Breast epithelium (tissue), 4 donors: ENCODE measurements at regions of chr18 and their contacts with region 1.

Region 1: DNA sequence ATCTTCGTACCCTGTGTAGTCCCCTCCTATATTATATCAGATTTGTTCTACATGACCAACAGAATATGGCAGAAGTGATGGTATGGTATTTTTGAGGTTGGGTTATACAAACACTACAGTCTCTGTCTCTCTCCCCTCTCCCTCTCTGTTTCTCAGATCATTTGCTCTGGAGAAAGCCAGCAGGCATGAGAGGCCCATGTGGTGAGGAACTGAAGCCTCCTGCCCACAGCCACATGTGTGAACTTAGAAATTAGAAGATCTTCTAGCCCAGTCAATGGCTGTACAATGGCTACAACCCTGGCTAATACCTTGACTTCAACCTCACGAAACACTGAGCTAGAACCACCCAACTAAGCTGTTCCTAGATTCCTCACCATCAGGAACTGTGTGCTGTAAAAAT is 250.6 kb downstream of the SMAD2 start:
- DNase-seq: no peak
- H3K4me3 ChIP-seq: no peak overlapping the region
- H3K27ac ChIP-seq: no peak overlapping the region
- H3K4me1 ChIP-seq: no peaks in the 10 kb centered on the region
- H3K27me3 ChIP-seq: no peaks in the 10 kb centered on the region
- CTCF ChIP-seq: no peak
- POLR2A ChIP-seq: no peak

Region 2: DNA sequence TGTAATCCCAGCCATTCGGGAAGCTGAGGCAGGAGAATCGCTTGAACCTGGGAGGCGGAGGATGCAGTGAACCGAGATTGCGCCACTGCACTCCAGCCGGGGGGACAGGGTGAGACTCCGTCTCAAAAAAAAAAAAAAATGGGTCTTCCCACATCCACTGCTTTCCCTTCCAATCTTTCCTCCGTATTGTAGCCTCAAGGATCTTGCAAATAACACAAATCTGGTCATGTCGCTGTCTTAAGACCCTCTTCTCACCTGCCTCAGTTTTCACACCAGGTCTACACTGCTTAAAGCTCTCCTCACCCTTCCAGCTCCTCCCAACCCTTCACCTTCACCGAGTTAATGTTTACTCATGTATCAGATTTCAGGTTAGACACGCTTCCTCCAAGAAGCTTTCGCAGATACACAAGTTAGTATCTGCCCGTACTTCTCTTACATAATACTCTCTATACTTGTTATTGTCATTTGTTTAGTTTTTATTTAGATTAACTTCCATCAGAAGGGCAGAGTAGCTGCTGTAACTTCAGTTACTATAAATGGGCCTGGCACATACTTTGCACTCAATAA is 505.2 kb before region 1 on chr18:
- intact Hi-C with region 1: loop called (anchors 5 kb)
- DNase-seq: no peak
- H3K4me3 ChIP-seq: peak overlapping the region; percentile 74 to 100 (median 90)
- H3K27ac ChIP-seq: no peak overlapping the region
- H3K4me1 ChIP-seq: peaks cover 0 to 7% of the 10 kb centered on the region in 2 donors
- H3K27me3 ChIP-seq: no peaks in the 10 kb centered on the region
- CTCF ChIP-seq: no peak
- POLR2A ChIP-seq: no peak